GM12878 (cell line): ENCODE measurements at regions of chr11 and their contacts with region 1.

Region 1: GRCh38 chr11:36073411-36074203 is 129.7 kb downstream of the LDLRAD3 start:
- DNase-seq: no peak
- ATAC-seq: peak; percentile 41
- H3K4me3 ChIP-seq: no peak overlapping the region
- H3K27ac ChIP-seq: no peak overlapping the region
- H3K4me1 ChIP-seq: no peaks in the 10 kb centered on the region; the same call in 1 of the 2 replicates
- H3K27me3 ChIP-seq: no peaks in the 10 kb centered on the region
- CTCF ChIP-seq: no peak
- EP300 ChIP-seq: no peak
- POLR2A ChIP-seq: no peak
- RAD21 ChIP-seq: no peak

Region 2: GRCh38 chr11:35714882-35715627 is 358.6 kb before region 1 on chr11:
- CTCF ChIA-PET with region 1: no interaction called
- POLR2A ChIA-PET with region 1: no interaction called
- RAD21 ChIA-PET with region 1: no interaction called
- SMC1A ChIA-PET with region 1: interaction called, 4 read pairs
- in situ Hi-C with region 1: no loop called
- intact Hi-C with region 1: loop called (anchors 5 kb)
- DNase-seq: peak; percentile 77
- ATAC-seq: peak; percentile 91
- H3K4me3 ChIP-seq: no peak overlapping the region
- H3K27ac ChIP-seq: no peak overlapping the region; the same call in 1 of the 2 replicates
- H3K4me1 ChIP-seq: peaks cover 8% of the 10 kb centered on the region; the same call in 1 of the 2 replicates
- H3K27me3 ChIP-seq: no peaks in the 10 kb centered on the region
- CTCF ChIP-seq: no peak
- EP300 ChIP-seq: peak; percentile 47 to 55; a peak in 2 of 4 replicates
- POLR2A ChIP-seq: no peak
- RAD21 ChIP-seq: peak; percentile 13; the same call in 1 of the 2 replicates

Region 3: DNA sequence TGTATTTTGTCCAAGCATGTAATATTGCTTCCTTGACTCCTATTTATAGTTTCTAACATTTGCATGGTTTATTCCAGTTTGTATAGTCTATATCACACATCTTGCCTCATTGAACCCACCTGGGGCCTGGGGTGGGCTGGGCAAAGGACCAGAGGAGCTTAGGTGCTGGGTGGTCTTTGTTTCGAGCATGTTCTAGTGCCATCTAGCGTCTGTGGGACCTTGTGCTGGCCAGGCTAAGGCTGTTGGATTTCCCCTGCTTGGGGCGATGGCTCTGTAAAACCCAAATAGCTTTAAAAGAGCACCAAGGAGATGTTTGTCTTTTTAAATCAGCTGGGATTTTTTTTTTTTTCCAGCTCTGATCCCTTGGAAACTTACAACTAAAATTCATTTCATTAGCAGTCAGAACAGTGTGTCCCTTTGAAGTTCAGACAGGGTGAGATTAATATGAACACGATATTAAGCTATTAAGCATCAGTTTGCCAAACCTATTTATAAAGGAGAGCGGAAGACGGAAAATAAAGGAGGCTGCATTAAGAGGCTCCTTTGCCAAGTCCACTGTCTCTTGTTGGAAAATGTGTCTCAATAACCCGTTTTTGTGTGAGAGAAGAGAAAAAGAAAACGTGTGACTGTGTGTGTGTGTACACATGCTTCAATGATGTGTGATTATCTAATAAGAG is 58.3 kb after region 1 on chr11:
- CTCF ChIA-PET with region 1: interaction called, 18 read pairs
- POLR2A ChIA-PET with region 1: interaction called, 5 read pairs
- RAD21 ChIA-PET with region 1: interaction called, 10 read pairs
- SMC1A ChIA-PET with region 1: interaction called, 5 read pairs
- in situ Hi-C with region 1: no loop called
- intact Hi-C with region 1: no loop called
- DNase-seq: no peak
- ATAC-seq: peak; percentile 95
- H3K4me3 ChIP-seq: no peak overlapping the region
- H3K27ac ChIP-seq: no peak overlapping the region
- H3K4me1 ChIP-seq: no peaks in the 10 kb centered on the region
- H3K27me3 ChIP-seq: peaks cover 0 to 2% of the 10 kb centered on the region in 2 experiments; a peak in 2 of 4 replicates
- CTCF ChIP-seq: peak; percentile 63 to 77 (median 74)
- EP300 ChIP-seq: no peak
- POLR2A ChIP-seq: no peak
- RAD21 ChIP-seq: peak; percentile 78